Panc1 (cell line): ENCODE measurements at regions of chr2 and their contacts with region 1.

Region 1: GRCh38 chr2:233976690-233977294 is 59.6 kb downstream of the TRPM8 start:
- DNase-seq: peak; percentile 93
- ATAC-seq: peak; percentile 74
- H3K4me3 ChIP-seq: no peak overlapping the region
- H3K27ac ChIP-seq: peak overlapping the region; percentile 97
- H3K4me1 ChIP-seq: peaks cover 54% of the 10 kb centered on the region
- H3K27me3 ChIP-seq: no peaks in the 10 kb centered on the region
- CTCF ChIP-seq: peak; percentile 79

Region 2: DNA sequence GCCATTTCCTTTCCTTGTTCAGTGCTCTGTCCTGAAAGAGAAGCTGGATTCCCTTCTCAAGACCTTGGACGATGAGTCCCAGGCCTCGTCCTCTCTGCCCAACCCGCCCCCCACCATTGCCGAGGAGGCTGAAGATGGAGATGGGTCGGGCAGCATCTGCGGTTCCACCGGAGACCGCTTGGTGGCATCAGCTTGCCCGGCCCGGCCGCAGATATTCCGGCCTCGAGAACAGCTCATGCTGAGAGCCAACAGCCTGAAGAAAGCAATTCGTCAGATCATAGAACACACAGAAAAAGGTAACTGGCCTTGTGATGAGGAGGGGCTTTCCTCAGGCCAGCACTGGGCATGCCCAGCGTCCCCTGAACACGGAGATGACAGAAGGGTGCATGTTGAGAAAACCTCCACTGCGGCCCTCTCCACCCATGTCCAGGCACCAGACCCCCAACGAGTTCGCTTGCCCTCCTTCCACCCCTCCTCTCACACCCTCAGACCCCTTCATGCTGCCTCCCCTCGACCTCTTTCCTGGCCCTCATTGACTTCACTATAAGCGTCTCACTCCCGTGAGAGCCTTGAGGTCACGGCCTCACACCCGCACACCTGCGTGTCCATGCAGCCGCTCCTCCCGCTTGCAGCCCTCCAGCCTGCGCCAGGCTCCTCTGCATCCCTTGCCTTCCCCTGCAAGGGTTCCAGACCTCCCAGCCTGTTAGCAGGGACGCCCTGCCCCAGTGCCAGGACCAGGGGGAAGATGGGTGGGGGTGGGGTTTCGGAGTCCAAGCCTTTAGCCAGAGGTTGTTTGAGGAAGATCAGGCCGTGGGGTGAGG is 527.5 kb before region 1 on chr2:
- CTCF ChIA-PET with region 1: no interaction called
- POLR2A ChIA-PET with region 1: no interaction called
- in situ Hi-C with region 1: no loop called
- intact Hi-C with region 1: no loop called
- DNase-seq: no peak
- ATAC-seq: peak; percentile 70
- H3K4me3 ChIP-seq: no peak overlapping the region
- H3K27ac ChIP-seq: no peak overlapping the region
- H3K4me1 ChIP-seq: peaks cover 8% of the 10 kb centered on the region; the same call in 1 of the 2 replicates
- H3K27me3 ChIP-seq: no peaks in the 10 kb centered on the region
- CTCF ChIP-seq: peak; percentile 88

Region 3: DNA sequence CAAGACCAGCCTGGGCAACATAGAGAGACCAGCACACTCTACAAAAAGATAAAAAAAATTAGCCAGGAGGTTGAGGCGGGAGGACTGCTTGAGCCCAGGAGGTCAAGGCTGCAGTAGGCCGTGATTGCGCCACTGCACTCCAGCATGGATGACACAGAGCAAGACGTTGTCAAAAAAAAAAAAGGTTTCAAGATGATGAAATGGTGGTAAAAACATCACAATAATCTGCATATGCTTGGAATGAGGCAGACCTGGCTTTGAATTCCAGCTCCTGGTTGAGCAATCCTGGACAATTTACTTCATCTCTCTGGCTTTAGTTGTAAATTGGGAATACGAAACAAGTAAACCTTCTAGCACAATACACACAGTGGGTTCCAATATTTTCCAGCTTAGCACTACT is 434.3 kb before region 1 on chr2:
- CTCF ChIA-PET with region 1: no interaction called
- POLR2A ChIA-PET with region 1: no interaction called
- in situ Hi-C with region 1: no loop called
- intact Hi-C with region 1: no loop called
- DNase-seq: no peak
- ATAC-seq: no peak
- H3K4me3 ChIP-seq: no peak overlapping the region
- H3K27ac ChIP-seq: no peak overlapping the region
- H3K4me1 ChIP-seq: no peaks in the 10 kb centered on the region
- H3K27me3 ChIP-seq: no peaks in the 10 kb centered on the region
- CTCF ChIP-seq: no peak

Region 4: DNA sequence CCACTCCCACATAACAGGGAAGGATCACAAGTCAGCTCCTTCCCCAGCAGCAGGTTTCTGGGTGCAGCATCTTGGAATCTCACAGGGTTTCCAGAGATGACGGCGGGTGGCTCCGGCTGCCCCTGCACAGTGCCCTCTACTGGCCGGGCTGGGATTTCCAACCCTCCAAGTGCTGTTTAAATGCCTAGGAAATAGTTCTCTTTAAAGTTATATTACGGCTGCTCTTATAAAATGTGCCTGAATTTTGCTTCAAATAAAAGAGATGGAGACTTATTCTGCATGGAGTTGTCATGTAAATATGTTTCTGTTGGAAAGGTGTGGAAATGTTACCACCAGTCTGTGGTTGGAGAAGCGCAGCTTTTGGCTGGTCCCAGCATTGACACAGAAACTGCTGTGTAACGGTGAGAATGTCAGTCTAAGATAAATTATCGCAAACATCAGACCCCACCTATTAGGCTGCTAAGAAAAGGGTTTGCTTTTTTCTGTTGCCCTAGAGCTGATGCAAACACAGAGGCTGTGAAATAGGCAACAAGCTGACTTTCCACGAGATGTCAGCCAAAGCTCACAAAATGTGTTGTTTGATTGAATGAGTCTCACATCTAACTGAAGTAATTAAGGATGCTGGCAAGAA is 119.2 kb before region 1 on chr2:
- CTCF ChIA-PET with region 1: interaction called, 4 read pairs
- POLR2A ChIA-PET with region 1: interaction called, 3 read pairs
- in situ Hi-C with region 1: no loop called
- intact Hi-C with region 1: loop called (anchors 2 kb)
- DNase-seq: no peak
- ATAC-seq: 0 out of 2 replicates have a peak, but pooled peaks have one; percentile 19
- H3K4me3 ChIP-seq: no peak overlapping the region
- H3K27ac ChIP-seq: peak overlapping the region; percentile 83
- H3K4me1 ChIP-seq: peaks cover 20% of the 10 kb centered on the region
- H3K27me3 ChIP-seq: no peaks in the 10 kb centered on the region
- CTCF ChIP-seq: peak; percentile 93

Region 5: GRCh38 chr2:234191819-234192407 is 215.1 kb after region 1 on chr2:
- CTCF ChIA-PET with region 1: no interaction called
- POLR2A ChIA-PET with region 1: no interaction called
- in situ Hi-C with region 1: no loop called
- intact Hi-C with region 1: loop called (anchors 5 kb)
- DNase-seq: no peak
- ATAC-seq: peak; percentile 92
- H3K4me3 ChIP-seq: peak overlapping the region; percentile 28 to 43
- H3K27ac ChIP-seq: peak overlapping the region; percentile 98
- H3K4me1 ChIP-seq: peaks cover 32% of the 10 kb centered on the region
- H3K27me3 ChIP-seq: no peaks in the 10 kb centered on the region
- CTCF ChIP-seq: no peak

Region 6: GRCh38 chr2:234363011-234363487 is 386.3 kb after region 1 on chr2:
- CTCF ChIA-PET with region 1: no interaction called
- POLR2A ChIA-PET with region 1: no interaction called
- in situ Hi-C with region 1: no loop called
- intact Hi-C with region 1: loop called (anchors 2 kb)
- DNase-seq: peak; percentile 28
- ATAC-seq: peak; percentile 96
- H3K4me3 ChIP-seq: peak overlapping the region in 1 of 2 experiments; percentile 3; a peak in 1 of 4 replicates
- H3K27ac ChIP-seq: peak overlapping the region; percentile 100
- H3K4me1 ChIP-seq: peaks cover 57% of the 10 kb centered on the region
- H3K27me3 ChIP-seq: no peaks in the 10 kb centered on the region
- CTCF ChIP-seq: no peak

Region 7: GRCh38 chr2:234544659-234545611 is 568.1 kb after region 1 on chr2:
- CTCF ChIA-PET with region 1: interaction called, 3 read pairs
- POLR2A ChIA-PET with region 1: no interaction called
- in situ Hi-C with region 1: no loop called
- intact Hi-C with region 1: loop called (anchors 2 kb)
- DNase-seq: peak; percentile 15
- ATAC-seq: peak; percentile 86
- H3K4me3 ChIP-seq: no peak overlapping the region
- H3K27ac ChIP-seq: peak overlapping the region; percentile 42; the same call in 1 of the 2 replicates
- H3K4me1 ChIP-seq: peaks cover 6% of the 10 kb centered on the region
- H3K27me3 ChIP-seq: no peaks in the 10 kb centered on the region
- CTCF ChIP-seq: peak; percentile 85